SK-N-SH (cell line): ENCODE measurements at regions of chr4 and their contacts with region 1.

Region 1: DNA sequence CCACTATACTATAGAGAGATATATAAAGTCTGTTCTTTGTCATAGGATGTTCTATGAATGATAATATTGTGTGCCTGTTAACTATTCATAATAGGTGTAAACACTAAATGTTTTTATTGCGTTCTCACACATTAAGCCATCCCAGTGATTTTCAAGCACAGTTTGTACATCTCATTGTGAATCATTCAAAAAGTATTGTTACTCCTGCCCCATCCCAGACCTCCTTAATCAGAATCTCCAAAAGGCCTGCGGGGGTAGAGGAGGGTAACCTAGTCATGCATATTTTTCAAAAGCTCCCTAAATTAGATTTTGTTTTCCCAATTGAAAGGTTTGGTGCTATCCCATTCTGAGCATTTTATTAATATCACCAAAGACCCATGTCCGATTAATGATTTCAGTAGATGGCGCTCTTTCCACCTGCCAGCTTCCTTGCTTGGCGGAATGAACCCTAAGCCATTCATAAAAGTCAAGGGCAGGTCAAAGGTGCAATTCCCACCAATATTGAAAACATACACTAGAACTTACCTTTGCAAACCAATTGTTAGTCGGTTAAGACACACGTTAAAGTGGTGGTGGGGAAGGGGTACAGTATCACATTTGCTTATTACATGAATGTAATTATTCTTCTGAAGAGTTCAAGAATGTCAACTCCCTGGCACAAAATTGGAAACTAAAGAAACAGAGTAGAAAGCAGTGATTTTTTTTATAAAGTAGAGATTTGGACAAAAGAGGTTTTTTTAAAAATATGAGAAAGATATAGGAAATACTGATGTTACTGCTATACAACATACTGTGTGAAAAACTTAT is 5.8 kb upstream of the TET2 start:
- DNase-seq: peak; percentile 55
- H3K4me3 ChIP-seq: no peak overlapping the region; a peak in 1 of 4 replicates
- H3K27ac ChIP-seq: 0 out of 4 replicates have a peak overlapping the region, but pooled peaks of 1 of the 2 experiments have one; percentile 49
- H3K4me1 ChIP-seq: 0 out of 4 replicates have a peak, but pooled peaks cover 0 to 8% of the 10 kb centered on the region in 2 experiments
- H3K27me3 ChIP-seq: no peaks in the 10 kb centered on the region
- CTCF ChIP-seq: peak; percentile 78
- EP300 ChIP-seq: no peak
- RAD21 ChIP-seq: peak; percentile 90

Region 2: GRCh38 chr4:105461221-105461620 is 320.3 kb after region 1 on chr4:
- CTCF ChIA-PET with region 1: interaction called, 14 read pairs
- POLR2A ChIA-PET with region 1: no interaction called
- DNase-seq: no peak
- H3K4me3 ChIP-seq: no peak overlapping the region
- H3K27ac ChIP-seq: no peak overlapping the region
- H3K4me1 ChIP-seq: no peaks in the 10 kb centered on the region
- H3K27me3 ChIP-seq: no peaks in the 10 kb centered on the region
- CTCF ChIP-seq: no peak
- EP300 ChIP-seq: no peak
- RAD21 ChIP-seq: no peak

Region 3: DNA sequence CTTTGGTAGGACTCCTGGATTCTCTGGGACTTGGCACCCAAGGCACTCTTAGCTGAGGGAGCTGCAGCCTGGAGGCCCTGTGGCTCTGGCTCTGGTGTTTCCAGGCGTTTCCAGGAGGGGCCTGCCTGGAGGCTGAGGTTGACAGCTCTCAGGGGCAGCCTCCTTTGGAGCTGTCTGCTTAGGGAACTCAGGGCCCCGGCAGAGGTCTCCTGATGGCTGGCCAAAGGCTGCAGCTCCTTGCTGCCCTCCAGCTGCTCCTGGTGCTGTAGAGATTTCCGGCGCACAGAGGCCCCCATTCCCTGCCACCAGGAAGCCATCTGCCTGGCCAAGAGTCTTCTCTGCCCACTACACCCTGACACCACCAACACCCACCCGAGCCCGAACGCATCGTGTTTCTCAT is 386.2 kb after region 1 on chr4:
- CTCF ChIA-PET with region 1: no interaction called
- POLR2A ChIA-PET with region 1: no interaction called
- DNase-seq: no peak
- H3K4me3 ChIP-seq: no peak overlapping the region
- H3K27ac ChIP-seq: no peak overlapping the region
- H3K4me1 ChIP-seq: no peaks in the 10 kb centered on the region
- H3K27me3 ChIP-seq: no peaks in the 10 kb centered on the region
- CTCF ChIP-seq: no peak
- EP300 ChIP-seq: no peak
- RAD21 ChIP-seq: no peak